GM12878 (cell line): ENCODE measurements at regions of chr11 and their contacts with region 1.

Region 1: GRCh38 chr11:128365044-128365443 is 222.3 kb downstream of the ETS1 start:
- DNase-seq: no peak
- ATAC-seq: peak; percentile 48; the same call in 2 of the 3 replicates
- H3K4me3 ChIP-seq: no peak overlapping the region
- H3K27ac ChIP-seq: no peak overlapping the region
- H3K4me1 ChIP-seq: no peaks in the 10 kb centered on the region
- H3K27me3 ChIP-seq: no peaks in the 10 kb centered on the region
- CTCF ChIP-seq: no peak
- EP300 ChIP-seq: no peak
- POLR2A ChIP-seq: no peak
- RAD21 ChIP-seq: no peak

Region 2: GRCh38 chr11:128354476-128354875 is 10.6 kb before region 1 on chr11:
- CTCF ChIA-PET with region 1: no interaction called
- POLR2A ChIA-PET with region 1: interaction called, 3 read pairs
- RAD21 ChIA-PET with region 1: no interaction called
- SMC1A ChIA-PET with region 1: interaction called, 24 read pairs
- in situ Hi-C with region 1: no loop called
- intact Hi-C with region 1: no loop called
- DNase-seq: no peak
- ATAC-seq: no peak
- H3K4me3 ChIP-seq: no peak overlapping the region
- H3K27ac ChIP-seq: no peak overlapping the region
- H3K4me1 ChIP-seq: no peaks in the 10 kb centered on the region
- H3K27me3 ChIP-seq: no peaks in the 10 kb centered on the region
- CTCF ChIP-seq: no peak
- EP300 ChIP-seq: no peak
- POLR2A ChIP-seq: no peak
- RAD21 ChIP-seq: no peak

Region 3: DNA sequence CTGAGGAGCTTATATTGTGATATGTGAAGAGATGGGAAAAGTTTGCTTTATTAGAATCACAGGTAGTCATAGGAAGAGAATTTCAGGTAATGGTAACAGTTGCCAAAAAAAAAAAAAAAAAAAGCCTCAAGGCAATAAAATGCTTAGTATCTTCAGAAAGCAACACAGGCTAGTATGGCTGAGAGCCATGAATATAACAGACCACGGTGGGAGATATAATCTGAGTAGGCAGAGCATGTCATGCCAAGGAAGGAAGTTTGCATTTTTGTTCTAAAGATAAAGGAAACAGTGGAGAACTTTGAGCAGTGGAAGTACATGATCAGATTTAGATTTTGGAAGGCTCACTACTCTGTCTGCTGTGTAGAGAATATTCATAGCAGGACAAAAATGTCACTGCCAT is 10.9 kb after region 1 on chr11:
- CTCF ChIA-PET with region 1: no interaction called
- POLR2A ChIA-PET with region 1: interaction called, 13 read pairs
- RAD21 ChIA-PET with region 1: interaction called, 3 read pairs
- SMC1A ChIA-PET with region 1: interaction called, 4 read pairs
- in situ Hi-C with region 1: no loop called
- intact Hi-C with region 1: no loop called
- DNase-seq: no peak
- ATAC-seq: no peak
- H3K4me3 ChIP-seq: no peak overlapping the region
- H3K27ac ChIP-seq: no peak overlapping the region
- H3K4me1 ChIP-seq: no peaks in the 10 kb centered on the region
- H3K27me3 ChIP-seq: no peaks in the 10 kb centered on the region
- CTCF ChIP-seq: no peak
- EP300 ChIP-seq: no peak
- POLR2A ChIP-seq: no peak
- RAD21 ChIP-seq: no peak